Psoas muscle (tissue), 8 donors: ENCODE measurements at regions of chr11 and their contacts with region 1.

Region 1: GRCh38 chr11:34250732-34251639 is 106.8 kb downstream of the ABTB2 start:
- DNase-seq: peak; percentile 73 to 91
- ATAC-seq: peak; percentile 98 to 99 (median 98)
- H3K4me3 ChIP-seq: peak overlapping the region; percentile 51
- H3K27ac ChIP-seq: peak overlapping the region; percentile 86
- H3K4me1 ChIP-seq: peaks cover 44% of the 10 kb centered on the region
- H3K27me3 ChIP-seq: no peaks in the 10 kb centered on the region
- CTCF ChIP-seq: no peak

Region 2: DNA sequence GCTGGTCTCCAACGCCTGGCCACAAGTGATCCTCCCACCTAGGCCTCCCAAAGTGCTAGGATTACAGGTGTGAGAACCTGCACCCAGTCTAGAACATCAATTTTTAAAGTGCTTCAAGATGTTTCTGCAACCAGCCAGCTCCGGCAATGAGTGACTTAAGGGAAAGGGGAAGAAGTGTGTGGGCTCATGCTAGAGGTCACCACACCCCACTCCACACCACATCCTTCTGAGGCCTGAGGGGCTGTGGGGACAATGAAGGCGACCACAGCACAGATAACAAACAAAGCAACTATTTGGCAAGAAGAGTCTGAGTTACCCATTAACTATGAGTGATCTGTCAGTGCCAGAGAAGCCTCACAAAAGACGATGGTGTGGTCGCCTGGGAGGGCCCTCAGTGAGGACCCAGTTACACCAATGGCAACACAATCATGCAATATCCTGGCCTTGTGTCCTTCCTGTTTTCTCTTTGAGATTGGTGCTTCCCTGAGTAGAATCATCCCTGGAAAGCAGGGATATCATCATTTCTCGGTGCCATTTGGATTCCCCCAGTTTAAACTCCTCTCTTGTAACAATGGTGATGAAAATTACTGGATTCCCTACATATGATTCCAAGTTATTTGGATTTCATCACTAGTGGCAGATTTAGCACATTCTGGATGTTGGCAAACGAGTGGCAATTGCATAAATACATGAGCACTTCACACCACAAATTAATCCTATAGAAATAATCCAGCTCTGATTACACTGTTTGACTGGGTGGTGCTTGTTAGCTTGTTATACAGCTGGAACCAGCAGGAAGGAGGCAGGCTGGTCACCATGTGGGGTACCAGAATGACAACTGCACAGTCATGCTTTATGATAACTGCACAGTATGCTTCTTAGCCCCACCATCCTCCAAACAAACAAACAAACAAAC is 88.4 kb after region 1 on chr11:
- intact Hi-C with region 1: loop called in 1 of 2 experiments (anchors 2 kb)
- DNase-seq: no peak
- ATAC-seq: no peak
- H3K4me3 ChIP-seq: no peak overlapping the region
- H3K27ac ChIP-seq: no peak overlapping the region
- H3K4me1 ChIP-seq: peaks cover 34% of the 10 kb centered on the region
- H3K27me3 ChIP-seq: no peaks in the 10 kb centered on the region
- CTCF ChIP-seq: no peak